OCI-LY7 (cell line): ENCODE measurements at regions of chr7 and their contacts with region 1.

Region 1: DNA sequence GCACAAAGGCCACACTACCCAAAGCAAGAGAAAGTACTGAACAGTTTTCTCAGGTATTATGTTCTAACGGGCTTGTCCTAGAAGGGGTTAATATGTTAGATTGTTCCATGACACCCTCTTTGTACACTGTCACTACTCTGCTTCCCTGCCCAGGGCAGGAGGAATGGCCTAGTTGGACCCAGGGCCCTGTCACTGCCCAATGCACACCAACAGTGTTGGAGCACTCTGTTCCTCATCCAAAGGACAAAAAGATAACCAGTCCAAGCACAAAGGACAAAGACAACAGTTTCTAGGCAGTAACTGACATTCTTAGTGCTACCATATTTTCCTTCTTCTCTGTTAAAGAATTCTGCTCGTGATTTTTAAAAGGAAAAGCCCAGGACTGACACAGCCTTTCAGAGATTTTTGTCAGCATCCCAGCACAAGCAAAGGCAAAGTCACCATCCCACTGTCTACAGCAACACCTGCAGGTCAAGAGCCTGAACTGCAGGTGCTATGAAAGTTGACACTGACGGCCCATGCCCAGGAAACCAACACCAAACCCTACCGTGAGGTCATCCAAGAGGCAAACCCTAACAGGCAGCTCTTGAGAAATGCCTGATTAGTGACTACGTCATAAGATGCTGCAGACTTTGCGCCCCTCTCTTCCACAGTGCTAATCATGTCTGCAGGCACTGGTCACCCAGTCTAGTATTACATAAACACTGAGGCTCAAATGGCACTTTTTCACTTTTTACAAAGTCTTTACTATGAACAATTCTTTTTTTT is 13.2 kb downstream of the NUDCD3 start:
- DNase-seq: peak; percentile 75
- H3K4me3 ChIP-seq: no peak overlapping the region
- H3K27ac ChIP-seq: no peak overlapping the region
- H3K4me1 ChIP-seq: peaks cover 33% of the 10 kb centered on the region
- CTCF ChIP-seq: peak; percentile 97

Region 2: DNA sequence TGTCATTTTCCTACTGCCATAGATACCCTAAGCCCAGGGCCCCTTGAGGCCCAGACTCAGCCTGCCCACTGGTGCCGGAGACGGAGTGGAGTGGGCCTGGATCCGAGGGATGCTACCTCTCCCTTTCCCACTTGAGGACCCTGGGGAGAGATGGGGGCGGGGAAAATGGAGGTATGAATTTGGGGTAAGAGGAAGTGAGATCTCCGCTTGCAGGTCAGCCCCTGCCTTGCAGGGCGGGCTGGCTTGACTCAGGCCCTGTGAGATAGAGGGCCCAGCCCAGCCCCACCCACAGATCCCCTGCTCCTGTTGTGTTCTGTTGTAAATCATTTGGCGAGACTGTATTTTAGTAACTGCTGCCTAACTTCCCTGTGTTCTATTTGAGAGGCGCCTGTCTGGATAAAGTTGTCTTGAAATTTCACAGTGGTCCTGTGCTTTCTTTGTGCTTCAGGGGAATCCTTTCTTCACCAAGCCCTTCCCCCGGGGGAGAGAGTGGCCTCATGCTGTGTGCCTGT is 263.3 kb before region 1 on chr7:
- CTCF ChIA-PET with region 1: no interaction called
- POLR2A ChIA-PET with region 1: no interaction called
- intact Hi-C with region 1: loop called (anchors 1 kb)
- DNase-seq: peak; percentile 26
- H3K4me3 ChIP-seq: no peak overlapping the region
- H3K27ac ChIP-seq: peak overlapping the region; percentile 29
- H3K4me1 ChIP-seq: peaks cover 14% of the 10 kb centered on the region
- CTCF ChIP-seq: no peak

Region 3: GRCh38 chr7:44240983-44241510 is 236.2 kb before region 1 on chr7:
- CTCF ChIA-PET with region 1: interaction called, 4 read pairs
- POLR2A ChIA-PET with region 1: no interaction called
- intact Hi-C with region 1: loop called (anchors 1 kb)
- DNase-seq: peak; percentile 91
- H3K4me3 ChIP-seq: no peak overlapping the region
- H3K27ac ChIP-seq: no peak overlapping the region
- H3K4me1 ChIP-seq: peaks cover 4% of the 10 kb centered on the region
- CTCF ChIP-seq: peak; percentile 91

Region 4: GRCh38 chr7:44348300-44348699 is 128.9 kb before region 1 on chr7:
- CTCF ChIA-PET with region 1: no interaction called
- POLR2A ChIA-PET with region 1: no interaction called
- intact Hi-C with region 1: loop called (anchors 1 kb)
- DNase-seq: peak; percentile 73
- H3K4me3 ChIP-seq: no peak overlapping the region
- H3K27ac ChIP-seq: no peak overlapping the region
- H3K4me1 ChIP-seq: no peaks in the 10 kb centered on the region
- CTCF ChIP-seq: peak; percentile 80

Region 5: GRCh38 chr7:44375236-44375699 is 102.0 kb before region 1 on chr7:
- CTCF ChIA-PET with region 1: no interaction called
- POLR2A ChIA-PET with region 1: no interaction called
- intact Hi-C with region 1: loop called (anchors 1 kb)
- DNase-seq: no peak
- H3K4me3 ChIP-seq: no peak overlapping the region
- H3K27ac ChIP-seq: no peak overlapping the region
- H3K4me1 ChIP-seq: peaks cover 19% of the 10 kb centered on the region
- CTCF ChIP-seq: peak; percentile 41; the same call in 1 of the 2 replicates

Region 6: DNA sequence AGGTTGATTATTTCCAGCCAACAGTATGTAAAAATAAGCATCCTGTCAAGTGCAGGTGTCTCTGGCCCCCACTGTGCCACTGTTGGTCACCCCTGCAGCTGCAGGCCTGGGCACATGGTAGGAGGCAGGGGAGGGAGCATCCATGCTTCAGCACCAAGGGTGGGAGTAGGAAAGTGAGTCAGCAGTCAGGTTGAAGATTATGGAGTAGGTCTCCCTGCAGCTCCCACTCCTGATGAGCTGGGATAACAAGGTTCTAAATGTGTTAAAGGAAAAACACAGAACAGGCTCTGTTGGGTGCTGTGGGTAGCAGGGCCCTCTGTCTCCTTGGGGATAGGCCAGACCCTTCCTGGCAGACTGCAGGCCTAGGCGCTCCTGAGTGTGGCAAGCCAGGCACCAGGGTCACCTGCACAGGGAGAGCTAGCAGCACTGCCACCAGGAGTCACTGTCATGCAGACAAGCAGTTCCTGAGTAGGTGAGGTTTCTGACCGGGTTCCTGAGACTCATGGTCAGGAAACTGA is 46.1 kb before region 1 on chr7:
- CTCF ChIA-PET with region 1: interaction called, 3 read pairs
- POLR2A ChIA-PET with region 1: interaction called, 9 read pairs
- intact Hi-C with region 1: loop called (anchors 1 kb)
- DNase-seq: peak; percentile 84
- H3K4me3 ChIP-seq: peak overlapping the region; percentile 45
- H3K27ac ChIP-seq: peak overlapping the region; percentile 83
- H3K4me1 ChIP-seq: peaks cover 57% of the 10 kb centered on the region
- CTCF ChIP-seq: peak; percentile 76

Region 7: DNA sequence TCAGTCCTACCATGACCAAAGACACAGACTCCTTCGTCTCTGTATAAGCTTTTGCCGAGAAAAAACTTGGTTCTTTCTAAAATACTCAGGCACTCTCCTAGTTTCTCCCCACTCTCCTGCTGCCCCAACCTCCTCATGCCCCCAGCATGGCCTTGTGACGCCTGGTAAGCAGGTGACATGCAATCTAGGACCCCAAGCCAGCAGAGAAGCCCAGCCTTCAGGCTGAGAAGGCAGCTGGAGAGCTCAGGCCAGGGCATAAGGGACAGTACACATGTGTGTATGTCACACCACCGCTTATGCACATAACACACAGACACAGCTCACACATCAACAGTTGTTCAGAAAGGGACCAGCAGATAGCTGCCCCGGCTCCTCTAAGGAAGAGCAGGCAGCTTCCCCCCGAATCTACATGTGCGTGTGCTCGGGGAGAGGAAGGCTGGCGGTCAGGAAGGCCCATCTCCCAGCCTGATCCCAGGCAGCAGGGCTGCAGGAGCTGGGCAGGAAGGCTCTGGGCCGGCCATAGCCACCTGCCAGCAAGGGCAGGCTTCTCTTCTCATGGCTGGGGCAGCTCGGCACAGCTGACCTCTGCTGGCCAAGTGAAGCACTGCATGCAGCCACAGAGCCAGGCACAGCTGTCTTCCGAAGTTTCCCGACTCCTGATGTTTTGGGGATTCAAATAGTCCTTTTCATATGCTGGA is 88.0 kb after region 1 on chr7:
- CTCF ChIA-PET with region 1: no interaction called
- POLR2A ChIA-PET with region 1: no interaction called
- intact Hi-C with region 1: loop called (anchors 5 kb)
- DNase-seq: peak; percentile 65
- H3K4me3 ChIP-seq: no peak overlapping the region
- H3K27ac ChIP-seq: no peak overlapping the region
- H3K4me1 ChIP-seq: no peaks in the 10 kb centered on the region
- CTCF ChIP-seq: peak; percentile 94